IMR-90 (cell line): ENCODE measurements at regions of chr5 and their contacts with region 1.

Region 1: DNA sequence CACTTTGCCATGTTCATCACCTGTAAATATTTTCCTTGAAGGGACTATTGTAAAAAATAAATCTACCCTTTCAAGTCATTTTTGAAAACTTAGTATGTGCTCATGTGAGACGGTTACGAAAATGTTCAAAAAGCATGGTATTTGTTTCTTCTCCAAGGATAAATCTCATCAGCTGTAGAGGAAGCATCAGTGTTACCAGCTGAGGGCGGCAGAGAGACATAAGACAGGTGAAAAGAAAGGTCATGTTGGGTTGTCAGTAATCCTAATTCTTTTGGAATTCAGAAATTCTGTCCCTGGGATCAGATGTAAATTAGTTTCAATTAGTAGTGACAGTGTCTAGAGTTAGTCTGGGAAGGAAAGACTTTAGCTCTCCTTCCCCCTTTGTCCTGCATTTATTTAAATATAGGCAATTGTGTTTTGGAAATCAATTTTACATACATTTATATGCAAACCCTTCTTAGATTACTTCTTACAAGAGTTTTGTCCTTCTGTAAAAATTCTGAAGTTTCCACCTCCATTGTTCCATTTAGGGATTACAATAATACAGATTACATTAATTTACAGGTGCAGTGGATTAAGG is 791.9 kb upstream of the CDH6 start:
- DNase-seq: peak; percentile 48
- ATAC-seq: peak; percentile 77
- H3K4me3 ChIP-seq: no peak overlapping the region
- H3K27ac ChIP-seq: no peak overlapping the region
- H3K4me1 ChIP-seq: no peaks in the 10 kb centered on the region
- H3K27me3 ChIP-seq: no peaks in the 10 kb centered on the region
- CTCF ChIP-seq: peak; percentile 63
- POLR2A ChIP-seq: no peak
- RAD21 ChIP-seq: peak; percentile 68

Region 2: DNA sequence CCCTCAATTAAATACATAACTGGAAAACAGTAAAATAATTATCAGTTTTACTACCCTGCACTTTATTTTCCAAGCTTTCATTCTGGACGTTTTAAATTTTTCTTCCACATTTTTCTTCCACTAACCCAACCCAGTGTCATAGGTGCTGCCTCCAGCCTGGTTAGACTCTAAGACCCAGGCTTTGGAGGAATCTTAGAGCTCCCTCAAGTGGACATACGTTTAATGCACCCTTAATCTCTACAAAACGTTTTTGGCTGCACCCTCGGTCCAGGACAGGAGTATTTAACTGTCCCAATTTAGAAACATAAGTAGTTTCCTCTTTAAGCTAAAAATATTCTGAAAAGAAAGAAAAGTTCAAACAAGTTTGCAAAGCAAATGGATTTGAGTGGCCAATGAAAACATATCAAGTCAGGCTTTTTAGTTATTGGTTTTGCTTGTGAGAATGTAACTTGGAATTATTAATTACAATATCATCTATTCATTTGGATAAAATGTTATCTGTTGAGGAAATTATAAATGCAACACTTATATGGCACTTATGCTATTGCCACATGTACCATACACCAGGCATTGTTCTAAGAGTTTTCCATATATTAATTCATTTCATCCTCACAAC is 830.8 kb after region 1 on chr5:
- CTCF ChIA-PET with region 1: interaction called, 8 read pairs
- POLR2A ChIA-PET with region 1: no interaction called
- dilution Hi-C with region 1: no loop called
- in situ Hi-C with region 1: no loop called
- intact Hi-C with region 1: loop called (anchors 1 kb)
- DNase-seq: peak; percentile 74
- ATAC-seq: peak; percentile 90
- H3K4me3 ChIP-seq: no peak overlapping the region
- H3K27ac ChIP-seq: no peak overlapping the region
- H3K4me1 ChIP-seq: peaks cover 4% of the 10 kb centered on the region; the same call in 1 of the 2 replicates
- H3K27me3 ChIP-seq: no peaks in the 10 kb centered on the region
- CTCF ChIP-seq: peak; percentile 92
- POLR2A ChIP-seq: no peak
- RAD21 ChIP-seq: peak; percentile 95

Region 3: GRCh38 chr5:31244921-31245320 is 843.4 kb after region 1 on chr5:
- CTCF ChIA-PET with region 1: no interaction called
- POLR2A ChIA-PET with region 1: no interaction called
- dilution Hi-C with region 1: no loop called
- in situ Hi-C with region 1: loop called (anchors 10 kb)
- intact Hi-C with region 1: no loop called
- DNase-seq: no peak
- ATAC-seq: no peak
- H3K4me3 ChIP-seq: no peak overlapping the region
- H3K27ac ChIP-seq: no peak overlapping the region
- H3K4me1 ChIP-seq: peaks cover 4% of the 10 kb centered on the region; the same call in 1 of the 2 replicates
- H3K27me3 ChIP-seq: no peaks in the 10 kb centered on the region
- CTCF ChIP-seq: no peak
- POLR2A ChIP-seq: no peak
- RAD21 ChIP-seq: no peak

Region 4: DNA sequence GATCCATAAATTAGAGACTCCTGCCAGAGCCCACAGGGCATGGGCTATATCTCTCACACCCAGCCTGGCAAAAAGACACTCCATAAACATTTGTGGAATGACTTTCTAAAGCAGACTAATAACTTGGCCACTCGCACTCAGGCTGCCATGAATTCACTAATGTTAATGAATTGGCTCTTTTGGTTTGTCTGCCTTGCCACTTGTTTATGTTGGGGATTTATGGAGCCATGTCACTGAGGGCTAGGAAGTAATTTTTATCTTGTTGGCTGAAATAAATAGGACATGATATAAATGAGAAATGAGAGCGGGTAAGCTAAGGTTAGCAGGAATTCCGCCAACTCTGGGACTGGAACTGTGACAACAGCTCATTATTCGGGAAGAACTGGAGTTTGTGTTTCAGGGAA is 1075.2 kb after region 1 on chr5:
- CTCF ChIA-PET with region 1: no interaction called
- POLR2A ChIA-PET with region 1: no interaction called
- dilution Hi-C with region 1: no loop called
- in situ Hi-C with region 1: loop called (anchors 25 kb)
- intact Hi-C with region 1: loop called (anchors 5 kb)
- DNase-seq: no peak
- ATAC-seq: no peak
- H3K4me3 ChIP-seq: no peak overlapping the region
- H3K27ac ChIP-seq: peak overlapping the region; percentile 56; the same call in 1 of the 2 replicates
- H3K4me1 ChIP-seq: peaks cover 15% of the 10 kb centered on the region
- H3K27me3 ChIP-seq: no peaks in the 10 kb centered on the region
- CTCF ChIP-seq: no peak
- POLR2A ChIP-seq: no peak
- RAD21 ChIP-seq: no peak

Region 5: GRCh38 chr5:31492869-31493268 is 1091.3 kb after region 1 on chr5:
- CTCF ChIA-PET with region 1: no interaction called
- POLR2A ChIA-PET with region 1: no interaction called
- dilution Hi-C with region 1: no loop called
- in situ Hi-C with region 1: loop called (anchors 25 kb)
- intact Hi-C with region 1: no loop called
- DNase-seq: peak; percentile 53
- ATAC-seq: peak; percentile 70
- H3K4me3 ChIP-seq: no peak overlapping the region
- H3K27ac ChIP-seq: no peak overlapping the region
- H3K4me1 ChIP-seq: peaks cover 3% of the 10 kb centered on the region
- H3K27me3 ChIP-seq: no peaks in the 10 kb centered on the region
- CTCF ChIP-seq: no peak
- POLR2A ChIP-seq: no peak
- RAD21 ChIP-seq: no peak